ENCODE measurements at regions of chr10 and their contacts with region 1.

Region 1: GRCh38 chr10:97425964-97426775 is at the start of gene PGAM1:
- DNase-seq: peak; percentile 95
- ATAC-seq: peak; percentile 92
- H3K4me3 ChIP-seq: peak within 1 kb of the TSS; percentile 97
- H3K27ac ChIP-seq: peak within 1 kb of the TSS; percentile 95
- H3K4me1 ChIP-seq: peaks cover 18% of the 10 kb centered on the region
- H3K27me3 ChIP-seq: no peaks in the 10 kb centered on the region
- CTCF ChIP-seq: peak; percentile 83 to 99 (median 86); a peak in 5 of 6 replicates
- EP300 ChIP-seq: no peak
- POLR2A ChIP-seq: peak; percentile 81
- RAD21 ChIP-seq: 0 out of 2 replicates have a peak, but pooled peaks have one; percentile 1
- polyA plus RNA-seq, gene PGAM1: 115 to 271 TPM

Region 2: GRCh38 chr10:97407211-97407951 is 18.8 kb before region 1 on chr10:
- CTCF ChIA-PET with region 1: interaction called, 10 read pairs
- POLR2A ChIA-PET with region 1: interaction called, 3 read pairs
- RAD21 ChIA-PET with region 1: interaction called, 4 read pairs
- SMC1A ChIA-PET with region 1: interaction called, 4 read pairs
- in situ Hi-C with region 1: no loop called
- intact Hi-C with region 1: loop called (anchors 2 kb)
- DNase-seq: no peak
- ATAC-seq: peak; percentile 99
- H3K4me3 ChIP-seq: no peak overlapping the region
- H3K27ac ChIP-seq: no peak overlapping the region
- H3K4me1 ChIP-seq: no peaks in the 10 kb centered on the region
- H3K27me3 ChIP-seq: no peaks in the 10 kb centered on the region
- CTCF ChIP-seq: peak; percentile 65 to 80 (median 67)
- EP300 ChIP-seq: no peak
- POLR2A ChIP-seq: no peak
- RAD21 ChIP-seq: peak; percentile 66

Region 3: GRCh38 chr10:97412891-97413304 is 13.3 kb before region 1 on chr10:
- CTCF ChIA-PET with region 1: interaction called, 20 read pairs
- POLR2A ChIA-PET with region 1: interaction called, 9 read pairs
- RAD21 ChIA-PET with region 1: interaction called, 4 read pairs
- SMC1A ChIA-PET with region 1: interaction called, 4 read pairs
- in situ Hi-C with region 1: no loop called
- intact Hi-C with region 1: no loop called
- DNase-seq: no peak
- ATAC-seq: peak; percentile 66
- H3K4me3 ChIP-seq: no peak overlapping the region
- H3K27ac ChIP-seq: peak overlapping the region; percentile 20; the same call in 1 of the 2 replicates
- H3K4me1 ChIP-seq: peaks cover 3% of the 10 kb centered on the region; the same call in 1 of the 2 replicates
- H3K27me3 ChIP-seq: no peaks in the 10 kb centered on the region
- CTCF ChIP-seq: no peak
- EP300 ChIP-seq: no peak
- POLR2A ChIP-seq: no peak
- RAD21 ChIP-seq: no peak

Region 4: DNA sequence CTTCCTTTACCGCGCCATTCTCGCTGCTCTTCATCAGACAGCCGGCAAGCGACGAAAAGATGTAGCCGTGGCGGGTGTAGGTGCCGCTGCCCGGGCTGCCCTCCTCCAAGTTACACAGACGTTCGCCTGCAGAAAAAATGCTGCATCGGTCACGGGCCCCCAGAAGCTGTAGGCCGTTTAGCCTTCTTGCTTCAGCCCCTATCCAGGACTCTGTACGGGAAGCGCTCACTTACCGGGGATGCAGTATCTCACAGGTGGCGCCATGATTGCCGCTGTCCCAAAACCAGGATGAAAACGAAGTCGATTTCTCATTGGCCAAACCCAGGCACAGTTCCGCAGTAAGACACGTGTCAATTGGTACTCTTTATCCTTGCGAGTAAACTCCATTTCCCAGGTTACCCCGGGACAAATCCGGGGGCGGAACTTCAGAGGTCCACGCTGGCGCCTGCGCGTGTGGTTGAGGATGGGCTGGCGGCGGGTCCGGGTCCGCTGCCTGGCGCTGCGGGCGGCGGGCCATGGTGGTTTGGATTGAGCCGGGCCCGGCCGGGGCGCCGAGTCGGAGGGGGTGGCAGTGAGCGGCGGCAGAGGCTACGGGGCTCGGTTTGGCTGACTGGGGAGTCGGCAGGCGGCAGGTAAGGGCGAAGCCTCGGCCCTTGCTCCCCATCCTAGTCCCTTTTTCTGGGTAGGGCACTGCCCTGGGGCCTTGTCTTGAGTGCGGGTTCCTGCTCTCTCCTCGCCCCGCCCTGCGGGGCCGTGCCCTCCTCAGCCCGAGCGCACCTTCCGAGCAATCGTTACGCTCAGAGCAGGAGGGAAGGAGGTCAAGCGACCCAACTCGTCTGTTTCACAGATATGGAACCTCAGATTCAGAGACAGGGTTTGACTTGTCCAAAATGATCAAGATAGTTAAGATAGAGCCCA is 19.8 kb after region 1 on chr10 and contains the starts of genes EXOSC1 and ZDHHC16:
- CTCF ChIA-PET with region 1: interaction called, 3 read pairs
- POLR2A ChIA-PET with region 1: interaction called, 6 read pairs
- RAD21 ChIA-PET with region 1: no interaction called
- SMC1A ChIA-PET with region 1: interaction called, 12 read pairs
- in situ Hi-C with region 1: no loop called
- intact Hi-C with region 1: no loop called
- DNase-seq: peak; percentile 93
- ATAC-seq: peak; percentile 98
- H3K4me3 ChIP-seq: peak within 1 kb of the TSS; percentile 89
- H3K27ac ChIP-seq: peak within 1 kb of the TSS; percentile 53
- H3K4me1 ChIP-seq: peaks cover 8% of the 10 kb centered on the region
- H3K27me3 ChIP-seq: no peaks in the 10 kb centered on the region
- CTCF ChIP-seq: peak in 1 of 3 experiments; percentile 23; a peak in 2 of 6 replicates
- EP300 ChIP-seq: no peak
- POLR2A ChIP-seq: peak; percentile 84
- RAD21 ChIP-seq: no peak
- polyA plus RNA-seq, gene EXOSC1: 88.8 to 121 TPM
- polyA plus RNA-seq, gene ZDHHC16: 16.8 to 20.0 TPM

Region 5: DNA sequence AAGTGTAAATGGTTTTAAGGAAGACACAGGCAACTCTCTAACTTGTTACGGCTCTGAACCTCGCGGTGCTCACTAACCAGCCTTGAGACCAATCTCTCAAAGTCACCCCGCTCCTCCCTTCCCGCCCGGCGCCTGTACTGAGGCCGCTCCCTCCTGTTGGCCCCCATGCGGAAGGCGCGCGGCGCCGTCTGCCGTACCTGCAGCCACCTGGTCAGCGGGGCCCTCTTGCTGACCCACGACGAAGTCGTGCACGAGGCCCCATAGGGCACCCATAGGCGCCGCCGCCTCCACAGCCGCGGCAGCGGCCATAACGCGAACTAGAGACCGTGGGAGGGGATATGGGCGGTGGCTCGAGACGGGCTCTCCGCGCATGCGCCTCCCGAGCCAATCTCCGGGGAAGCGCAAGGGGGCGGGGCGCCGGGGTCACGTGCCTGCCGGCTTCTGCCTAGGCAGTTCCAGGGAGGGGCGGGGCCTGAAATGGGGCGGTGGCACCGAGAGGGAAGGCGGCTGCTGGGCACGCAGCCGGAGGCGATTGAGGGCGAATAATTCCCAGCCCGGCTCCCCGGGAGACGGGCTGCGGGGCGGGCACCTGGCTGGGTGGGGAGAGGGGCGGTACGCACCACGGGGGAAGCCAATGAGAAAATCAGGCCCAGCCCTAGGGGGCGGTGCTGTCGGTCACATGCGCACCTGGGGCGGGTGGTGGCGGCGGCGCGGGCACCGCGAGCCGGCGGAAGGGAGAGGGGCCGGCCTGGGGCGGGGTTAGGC is 72.1 kb after region 1 on chr10 and contains the start of gene MMS19:
- CTCF ChIA-PET with region 1: no interaction called
- POLR2A ChIA-PET with region 1: no interaction called
- RAD21 ChIA-PET with region 1: no interaction called
- SMC1A ChIA-PET with region 1: no interaction called
- in situ Hi-C with region 1: no loop called
- intact Hi-C with region 1: loop called (anchors 5 kb)
- DNase-seq: peak; percentile 77
- ATAC-seq: peak; percentile 93
- H3K4me3 ChIP-seq: peak within 1 kb of the TSS; percentile 90
- H3K27ac ChIP-seq: peak within 1 kb of the TSS; percentile 87
- H3K4me1 ChIP-seq: peaks cover 5% of the 10 kb centered on the region
- H3K27me3 ChIP-seq: peaks cover 6 to 14% of the 10 kb centered on the region in 2 experiments
- CTCF ChIP-seq: no peak
- EP300 ChIP-seq: no peak
- POLR2A ChIP-seq: peak; percentile 95
- RAD21 ChIP-seq: no peak
- polyA plus RNA-seq, gene MMS19: 40.2 to 74.3 TPM

Region 6: GRCh38 chr10:99080275-99080945 is 1654.2 kb after region 1 on chr10:
- CTCF ChIA-PET with region 1: no interaction called
- POLR2A ChIA-PET with region 1: no interaction called
- RAD21 ChIA-PET with region 1: no interaction called
- SMC1A ChIA-PET with region 1: no interaction called
- in situ Hi-C with region 1: no loop called
- intact Hi-C with region 1: no loop called
- DNase-seq: no peak
- ATAC-seq: no peak
- H3K4me3 ChIP-seq: no peak overlapping the region
- H3K27ac ChIP-seq: no peak overlapping the region
- H3K4me1 ChIP-seq: no peaks in the 10 kb centered on the region
- H3K27me3 ChIP-seq: no peaks in the 10 kb centered on the region
- CTCF ChIP-seq: no peak
- EP300 ChIP-seq: no peak
- POLR2A ChIP-seq: no peak
- RAD21 ChIP-seq: no peak

Measured in GM12878 (cell line).